Activated T-helper 2 cell treated with anti-CD3 and anti-CD28 coated beads, Interferon-gamma antibody, Interleukin-2, Interleukin-4, amounts not matched to agents 10 μg/mL and 5 μg/mL and 100 μg/mL, durations not matched to agents 14 hours and 24 hours and 36 hours (primary cell): ENCODE measurements at regions of chr3 and their contacts with region 1.

Region 1: GRCh38 chr3:44761424-44762169 is at the starts of genes KIAA1143 and KIF15:
- DNase-seq: peak; percentile 94
- H3K4me3 Mint-ChIP-seq: peak within 1 kb of the TSS; percentile 96
- H3K27ac Mint-ChIP-seq: peak within 1 kb of the TSS; percentile 90
- H3K4me1 Mint-ChIP-seq: peaks cover 22% of the 10 kb centered on the region
- H3K27me3 Mint-ChIP-seq: no peaks in the 10 kb centered on the region
- total RNA-seq, gene KIAA1143: 39.2 and 43.7 TPM in 2 replicates
- total RNA-seq, gene KIF15: 28.5 and 28.7 TPM in 2 replicates

Region 2: DNA sequence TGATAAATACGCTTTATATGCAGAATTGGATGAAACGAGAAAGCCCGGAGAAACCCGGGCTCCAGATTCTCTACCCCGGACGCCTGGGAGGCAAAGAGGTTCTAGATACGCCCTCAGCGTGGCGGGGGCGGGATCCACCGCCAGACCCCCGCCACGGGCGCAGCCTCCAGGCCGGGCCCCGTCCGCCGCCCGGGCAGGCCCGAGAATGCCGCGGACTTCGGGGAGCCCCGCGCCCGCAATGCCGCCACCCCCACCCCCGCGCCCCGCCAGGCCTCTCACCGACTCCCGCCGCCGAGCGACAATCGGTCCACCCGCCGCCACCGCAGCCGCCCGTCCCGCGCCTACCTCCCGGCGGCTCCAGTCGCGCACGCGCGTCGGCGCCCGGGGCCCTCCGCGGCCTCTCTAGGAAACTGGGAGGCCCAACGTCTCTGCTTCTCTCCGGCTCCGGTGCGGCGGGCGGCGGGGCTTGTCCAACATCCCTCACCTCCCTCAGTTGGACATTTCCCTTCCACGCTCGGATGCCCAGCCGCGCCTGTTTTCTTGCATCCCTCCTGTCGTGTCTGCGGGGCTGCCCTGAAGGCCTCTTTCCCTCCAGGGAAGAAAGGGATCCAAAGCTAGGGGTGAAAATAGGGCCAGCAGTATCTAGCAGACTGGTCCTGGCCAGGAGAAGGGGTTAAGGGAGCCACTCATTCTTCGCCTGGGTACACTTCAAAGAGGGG is 284.1 kb before region 1 on chr3 and contains the start of gene ZNF445:
- intact Hi-C with region 1: loop called (anchors 10 kb)
- DNase-seq: peak; percentile 76
- H3K4me3 Mint-ChIP-seq: peak within 1 kb of the TSS; percentile 91
- H3K27ac Mint-ChIP-seq: peak within 1 kb of the TSS; percentile 82
- H3K4me1 Mint-ChIP-seq: peaks cover 27% of the 10 kb centered on the region
- H3K27me3 Mint-ChIP-seq: no peaks in the 10 kb centered on the region
- total RNA-seq, gene ZNF445: 22.6 and 24.0 TPM in 2 replicates

Region 3: DNA sequence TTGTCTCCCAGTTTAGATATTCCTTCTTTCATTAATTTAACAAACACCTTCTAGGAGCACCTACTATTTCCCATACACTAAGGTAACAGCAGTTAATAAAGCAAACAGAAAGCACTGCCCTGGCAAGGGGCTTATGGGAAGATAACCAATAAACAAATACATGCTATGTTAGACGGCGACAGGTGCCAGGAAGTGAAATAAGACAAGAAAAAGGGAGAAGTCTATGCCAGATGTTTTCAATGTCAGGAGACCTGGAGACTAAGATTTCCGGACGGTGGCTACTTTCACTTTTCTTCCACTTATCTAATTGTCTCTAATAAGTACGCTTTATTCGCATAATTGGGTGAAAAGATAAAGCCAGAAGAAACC is 251.6 kb before region 1 on chr3:
- intact Hi-C with region 1: loop called (anchors 5 kb)
- DNase-seq: no peak
- H3K4me3 Mint-ChIP-seq: peak overlapping the region; percentile 93
- H3K27ac Mint-ChIP-seq: peak overlapping the region; percentile 84
- H3K4me1 Mint-ChIP-seq: peaks cover 19% of the 10 kb centered on the region
- H3K27me3 Mint-ChIP-seq: no peaks in the 10 kb centered on the region

Region 4: DNA sequence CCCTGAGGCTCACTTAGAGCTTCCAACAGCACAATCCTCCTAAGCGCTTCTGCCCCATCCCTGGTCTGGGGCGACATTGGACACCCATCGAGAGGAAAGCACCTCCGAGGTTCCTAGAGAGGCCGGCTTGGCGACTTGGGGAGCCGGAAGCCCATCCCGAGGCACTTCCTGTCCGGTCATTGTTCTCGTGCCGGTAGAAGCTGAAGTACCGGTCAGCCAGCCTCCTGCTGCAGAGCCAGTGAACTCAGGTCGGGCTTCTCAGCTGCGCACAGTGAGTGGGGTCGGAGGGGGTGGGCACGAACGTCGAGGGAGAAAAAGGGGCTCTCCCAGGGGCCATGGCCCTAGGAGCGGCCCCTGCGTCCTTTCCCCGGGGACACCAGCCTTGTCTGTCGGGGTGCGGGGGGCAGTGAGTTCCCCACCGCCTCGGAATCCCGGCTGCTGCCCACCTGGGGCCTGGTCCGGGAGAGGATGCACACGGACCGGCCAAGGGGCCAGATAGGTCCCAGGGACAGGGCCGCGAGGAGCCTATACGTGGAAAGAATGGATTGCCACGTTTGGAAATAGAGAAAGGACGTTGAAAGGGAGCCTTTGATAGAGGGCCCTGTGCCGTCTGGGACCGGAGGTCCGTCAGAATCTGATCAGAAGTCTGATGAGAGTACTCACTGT is 112.9 kb before region 1 on chr3 and contains the start of gene ZNF35:
- intact Hi-C with region 1: loop called (anchors 10 kb)
- DNase-seq: peak; percentile 14
- H3K4me3 Mint-ChIP-seq: peak within 1 kb of the TSS; percentile 84
- H3K27ac Mint-ChIP-seq: no peak within 1 kb of the TSS
- H3K4me1 Mint-ChIP-seq: peaks cover 11% of the 10 kb centered on the region
- H3K27me3 Mint-ChIP-seq: no peaks in the 10 kb centered on the region
- total RNA-seq, gene ZNF35: 2.9 and 4.7 TPM in 2 replicates

Region 5: GRCh38 chr3:44729384-44729910 is 32.1 kb before region 1 on chr3 and contains the start of gene ZNF501:
- intact Hi-C with region 1: loop called (anchors 2 kb)
- DNase-seq: peak; percentile 76
- H3K4me3 Mint-ChIP-seq: peak within 1 kb of the TSS; percentile 92
- H3K27ac Mint-ChIP-seq: peak within 1 kb of the TSS; percentile 78
- H3K4me1 Mint-ChIP-seq: peaks cover 11% of the 10 kb centered on the region
- H3K27me3 Mint-ChIP-seq: no peaks in the 10 kb centered on the region
- total RNA-seq, gene ZNF501: 1.1 and 1.3 TPM in 2 replicates

Region 6: GRCh38 chr3:44861412-44862220 is 100.0 kb after region 1 on chr3 and contains the start of gene TMEM42:
- intact Hi-C with region 1: loop called (anchors 2 kb)
- DNase-seq: peak; percentile 86
- H3K4me3 Mint-ChIP-seq: peak within 1 kb of the TSS; percentile 85
- H3K27ac Mint-ChIP-seq: peak within 1 kb of the TSS; percentile 83
- H3K4me1 Mint-ChIP-seq: peaks cover 24% of the 10 kb centered on the region
- H3K27me3 Mint-ChIP-seq: no peaks in the 10 kb centered on the region
- total RNA-seq, gene TMEM42: 8.8 and 9.4 TPM in 2 replicates

Region 7: DNA sequence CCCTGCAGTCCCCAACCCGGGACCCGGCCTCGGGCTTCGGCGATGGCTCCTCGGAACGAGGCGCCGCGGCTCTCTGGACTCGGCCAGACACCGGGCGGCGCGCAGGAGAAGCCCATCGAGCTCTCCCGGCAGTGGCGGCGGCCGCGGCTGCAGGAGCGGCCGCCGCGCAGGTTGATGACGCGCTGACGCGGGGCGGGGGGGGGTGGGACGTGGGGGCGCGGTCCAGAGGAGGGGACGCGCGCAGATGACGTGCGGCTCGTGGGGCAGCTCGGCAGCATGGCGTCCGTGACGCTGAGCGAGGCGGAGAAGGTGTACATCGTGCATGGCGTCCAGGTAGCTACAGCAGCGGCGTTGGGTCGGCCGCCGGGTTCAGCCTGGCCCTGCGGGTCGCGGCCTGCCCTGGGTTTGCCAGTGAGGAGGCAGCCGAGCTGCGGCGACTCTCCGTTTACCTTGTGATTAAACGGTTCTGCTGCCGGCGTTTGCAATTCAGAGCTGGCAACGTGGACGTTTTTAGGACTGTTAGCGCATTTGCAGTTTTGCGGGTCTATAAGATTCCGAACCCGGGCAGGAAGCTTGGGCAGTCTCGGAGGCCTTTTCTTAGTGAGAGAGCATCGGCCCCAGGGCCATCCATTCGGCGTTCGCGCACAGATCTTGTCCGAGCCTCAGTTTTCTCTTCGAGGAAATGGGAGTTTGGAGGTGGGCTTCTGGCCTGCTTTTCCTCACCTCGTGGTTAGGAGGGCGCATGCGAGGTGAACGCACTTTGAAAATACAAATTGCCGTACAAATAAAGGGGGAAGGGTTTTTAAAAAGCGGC is 214.6 kb after region 1 on chr3 and contains the starts of genes EXOSC7 and ZDHHC3:
- intact Hi-C with region 1: loop called (anchors 5 kb)
- DNase-seq: peak; percentile 81
- H3K4me3 Mint-ChIP-seq: peak within 1 kb of the TSS; percentile 94
- H3K27ac Mint-ChIP-seq: peak within 1 kb of the TSS; percentile 89
- H3K4me1 Mint-ChIP-seq: peaks cover 48% of the 10 kb centered on the region
- H3K27me3 Mint-ChIP-seq: no peaks in the 10 kb centered on the region
- total RNA-seq, gene EXOSC7: 83.0 and 86.5 TPM in 2 replicates
- total RNA-seq, gene ZDHHC3: 38.0 and 40.3 TPM in 2 replicates